ENCODE measurements at regions of chr10 and their contacts with region 1.

Region 1: DNA sequence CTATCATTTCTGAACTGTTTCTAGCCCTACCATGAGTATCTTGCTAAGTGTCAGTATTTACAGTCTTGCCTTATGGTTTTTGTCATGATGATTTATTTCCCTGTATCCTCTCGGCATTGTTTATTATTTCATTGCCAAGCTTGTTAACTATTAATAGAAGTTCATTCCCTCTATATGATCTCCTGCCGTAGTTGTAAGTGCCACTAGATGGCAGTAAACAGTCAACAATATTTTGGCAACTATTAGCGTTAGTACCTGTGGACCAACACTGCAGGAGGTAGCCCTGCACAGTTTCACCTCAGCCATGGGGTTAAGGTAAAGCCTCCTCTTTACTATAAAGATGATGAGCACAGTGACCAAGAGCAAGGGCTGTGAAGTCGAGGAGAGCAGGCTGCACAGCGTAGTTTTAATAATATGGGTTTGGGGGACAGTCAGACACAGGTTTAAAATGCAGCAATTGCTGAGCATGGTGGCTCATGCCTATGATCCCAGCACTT is 26.1 kb upstream of the CCNJ start:
- DNase-seq: peak in 5 of 9 experiments; percentile 13 to 71 (median 36)
- ATAC-seq: peak; percentile 81
- H3K4me3 ChIP-seq: no peak overlapping the region
- H3K4me3 Mint-ChIP-seq: no peak overlapping the region
- H3K27ac ChIP-seq: no peak overlapping the region
- H3K27ac Mint-ChIP-seq: no peak overlapping the region
- H3K4me1 ChIP-seq: no peaks in the 10 kb centered on the region
- H3K4me1 Mint-ChIP-seq: no peaks in the 10 kb centered on the region
- H3K27me3 ChIP-seq: no peaks in the 10 kb centered on the region
- H3K27me3 Mint-ChIP-seq: peaks cover 5% of the 10 kb centered on the region
- CTCF ChIP-seq: peak; percentile 63

Region 2: GRCh38 chr10:95688648-95689047 is 328.6 kb before region 1 on chr10:
- CTCF ChIA-PET with region 1: no interaction called
- POLR2A ChIA-PET with region 1: no interaction called
- intact Hi-C with region 1: no loop called
- DNase-seq: peak in 1 of 9 experiments; percentile 13
- ATAC-seq: no peak
- H3K4me3 ChIP-seq: no peak overlapping the region
- H3K4me3 Mint-ChIP-seq: no peak overlapping the region
- H3K27ac ChIP-seq: no peak overlapping the region
- H3K27ac Mint-ChIP-seq: no peak overlapping the region
- H3K4me1 ChIP-seq: peaks cover 20% of the 10 kb centered on the region
- H3K4me1 Mint-ChIP-seq: peaks cover 38% of the 10 kb centered on the region
- H3K27me3 ChIP-seq: no peaks in the 10 kb centered on the region
- H3K27me3 Mint-ChIP-seq: no peaks in the 10 kb centered on the region
- CTCF ChIP-seq: no peak

Region 3: DNA sequence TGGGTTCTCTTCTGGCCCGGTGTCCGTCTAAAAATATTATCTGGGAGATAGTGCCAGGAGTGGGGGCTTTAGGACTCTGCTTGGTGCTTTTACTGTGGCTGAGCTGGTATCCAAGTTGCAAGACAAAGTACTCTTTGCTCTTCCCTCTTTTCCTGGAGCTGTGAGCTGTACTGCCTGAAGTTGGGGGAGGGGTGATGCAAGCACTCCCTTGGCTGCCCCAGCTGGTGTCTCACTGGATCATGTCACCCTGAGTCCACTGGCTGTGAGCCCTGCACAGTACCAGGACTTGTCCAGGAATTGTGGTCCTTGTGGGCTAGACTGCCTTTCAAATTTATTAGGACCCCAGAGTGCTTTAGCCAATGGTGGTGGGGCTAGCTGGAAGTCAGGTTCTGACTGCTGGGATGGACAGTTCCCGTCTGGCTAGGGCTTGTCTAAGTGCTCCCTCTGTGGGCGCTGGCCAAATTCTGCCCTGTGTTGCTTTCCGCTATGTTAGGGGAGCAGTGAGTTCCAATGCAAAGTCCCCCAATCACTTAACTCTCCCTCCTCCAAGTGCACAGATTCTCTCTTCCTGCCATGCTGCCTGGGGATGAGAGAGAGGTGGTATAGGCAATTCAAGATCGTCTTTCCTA is 96.3 kb before region 1 on chr10:
- CTCF ChIA-PET with region 1: no interaction called
- POLR2A ChIA-PET with region 1: no interaction called
- intact Hi-C with region 1: no loop called
- DNase-seq: no peak
- ATAC-seq: no peak
- H3K4me3 ChIP-seq: no peak overlapping the region
- H3K4me3 Mint-ChIP-seq: no peak overlapping the region
- H3K27ac ChIP-seq: no peak overlapping the region
- H3K27ac Mint-ChIP-seq: no peak overlapping the region
- H3K4me1 ChIP-seq: no peaks in the 10 kb centered on the region
- H3K4me1 Mint-ChIP-seq: no peaks in the 10 kb centered on the region
- H3K27me3 ChIP-seq: no peaks in the 10 kb centered on the region
- H3K27me3 Mint-ChIP-seq: peaks cover 9% of the 10 kb centered on the region
- CTCF ChIP-seq: no peak

Region 4: DNA sequence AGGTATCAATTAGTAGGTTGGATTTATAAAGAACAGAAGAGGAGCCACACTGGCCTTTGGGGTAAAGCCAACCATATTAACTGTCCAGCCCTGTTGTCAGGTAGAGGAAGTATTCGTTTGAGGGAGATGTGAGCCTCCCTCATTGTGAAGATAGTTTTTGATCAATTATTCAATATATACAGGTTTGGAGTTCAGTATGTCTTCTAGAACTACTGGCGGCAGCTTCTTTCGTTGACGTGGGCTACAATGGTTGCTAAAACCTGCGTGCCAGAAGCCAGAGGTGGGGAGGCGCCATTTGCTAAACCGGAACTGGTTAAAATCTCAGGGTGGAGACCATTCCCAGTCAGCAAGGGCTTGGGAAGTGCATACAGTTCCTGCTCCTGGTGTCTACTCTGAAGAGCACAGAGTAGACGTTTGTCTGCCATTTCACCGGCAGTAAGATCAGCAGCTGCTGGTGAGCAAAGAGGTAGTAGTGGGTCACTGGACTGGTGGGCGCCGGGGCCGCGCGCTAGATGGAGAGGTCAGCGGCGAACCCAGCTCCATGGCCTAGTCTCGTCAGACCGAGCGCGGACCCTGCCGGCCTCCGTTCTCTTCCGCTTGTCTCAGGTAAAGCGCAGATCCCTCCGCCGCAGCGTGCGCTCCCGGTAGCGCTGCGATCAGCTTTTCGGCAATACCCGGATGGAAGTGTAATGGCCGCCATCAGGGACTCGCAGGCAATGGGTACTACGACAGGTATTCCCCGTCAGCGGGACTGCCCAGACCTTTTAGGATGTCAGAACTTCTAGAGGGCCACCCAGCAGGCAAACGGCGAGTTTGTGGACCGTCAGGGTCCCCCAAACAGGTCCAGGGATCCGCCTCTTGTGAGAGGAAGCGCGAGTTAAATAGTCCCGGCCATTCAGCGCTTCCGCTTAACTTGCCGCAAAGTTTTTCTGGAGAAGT is 112.4 kb after region 1 on chr10 and contains the start of gene ZNF518A:
- CTCF ChIA-PET with region 1: no interaction called
- POLR2A ChIA-PET with region 1: interaction called, 3 read pairs
- intact Hi-C with region 1: loop called in 1 of 2 experiments (anchors 10 kb)
- DNase-seq: peak; percentile 80 to 97 (median 88)
- ATAC-seq: peak; percentile 82
- H3K4me3 ChIP-seq: peak within 1 kb of the TSS; percentile 92 to 93
- H3K4me3 Mint-ChIP-seq: peak within 1 kb of the TSS; percentile 96
- H3K27ac ChIP-seq: peak within 1 kb of the TSS; percentile 98 to 99
- H3K27ac Mint-ChIP-seq: peak within 1 kb of the TSS; percentile 99
- H3K4me1 ChIP-seq: peaks cover 19% of the 10 kb centered on the region
- H3K4me1 Mint-ChIP-seq: peaks cover 25% of the 10 kb centered on the region
- H3K27me3 ChIP-seq: peaks cover 2 to 7% of the 10 kb centered on the region in 2 experiments
- H3K27me3 Mint-ChIP-seq: peaks cover 37% of the 10 kb centered on the region
- CTCF ChIP-seq: no peak
- total RNA-seq, gene ZNF518A: 8.7 to 9.3 TPM

Region 5: GRCh38 chr10:96319754-96320474 is 302.7 kb after region 1 on chr10:
- CTCF ChIA-PET with region 1: interaction called, 14 read pairs
- POLR2A ChIA-PET with region 1: interaction called, 3 read pairs
- intact Hi-C with region 1: no loop called
- DNase-seq: no peak
- ATAC-seq: no peak
- H3K4me3 ChIP-seq: no peak overlapping the region
- H3K4me3 Mint-ChIP-seq: no peak overlapping the region
- H3K27ac ChIP-seq: no peak overlapping the region
- H3K27ac Mint-ChIP-seq: no peak overlapping the region
- H3K4me1 ChIP-seq: no peaks in the 10 kb centered on the region
- H3K4me1 Mint-ChIP-seq: no peaks in the 10 kb centered on the region
- H3K27me3 ChIP-seq: no peaks in the 10 kb centered on the region
- H3K27me3 Mint-ChIP-seq: peaks cover 13% of the 10 kb centered on the region
- CTCF ChIP-seq: no peak

Region 6: GRCh38 chr10:96374985-96375830 is 358.0 kb after region 1 on chr10:
- CTCF ChIA-PET with region 1: interaction called, 7 read pairs
- POLR2A ChIA-PET with region 1: no interaction called
- intact Hi-C with region 1: loop called in 1 of 2 experiments (anchors 1 kb)
- DNase-seq: peak; percentile 30 to 79 (median 68)
- ATAC-seq: peak; percentile 88
- H3K4me3 ChIP-seq: peak overlapping the region; percentile 56 to 71
- H3K4me3 Mint-ChIP-seq: peak overlapping the region; percentile 80
- H3K27ac ChIP-seq: no peak overlapping the region
- H3K27ac Mint-ChIP-seq: no peak overlapping the region
- H3K4me1 ChIP-seq: no peaks in the 10 kb centered on the region
- H3K4me1 Mint-ChIP-seq: peaks cover 11% of the 10 kb centered on the region
- H3K27me3 ChIP-seq: no peaks in the 10 kb centered on the region
- H3K27me3 Mint-ChIP-seq: peaks cover 3% of the 10 kb centered on the region
- CTCF ChIP-seq: peak; percentile 90